ENCODE measurements at regions of chr12 and their contacts with region 1.

Region 1: DNA sequence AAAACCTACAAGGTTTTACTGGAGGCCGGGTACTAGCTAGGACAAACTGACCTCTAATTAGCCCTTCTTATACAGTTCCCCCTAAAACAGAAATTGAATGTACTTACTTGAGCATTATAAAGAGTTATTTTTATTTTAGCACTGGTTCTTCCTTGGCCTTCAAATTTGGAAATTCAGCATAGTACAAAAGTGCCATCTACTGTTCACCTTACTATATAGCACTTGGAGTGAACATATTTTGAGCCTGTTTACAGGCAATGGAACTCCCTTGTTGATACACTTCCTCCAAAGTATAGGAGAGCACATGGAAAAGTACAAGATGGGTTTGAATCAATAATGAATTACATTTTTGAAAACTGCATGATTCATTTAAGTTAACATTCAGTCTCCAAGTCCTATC is 3.9 kb upstream of the POC1B start:
- DNase-seq: peak; percentile 13
- ATAC-seq: no peak
- H3K4me3 ChIP-seq: no peak overlapping the region
- H3K27ac ChIP-seq: no peak overlapping the region
- H3K4me1 ChIP-seq: peaks cover 7% of the 10 kb centered on the region
- H3K27me3 ChIP-seq: no peaks in the 10 kb centered on the region
- CTCF ChIP-seq: peak; percentile 63 to 85 (median 79); a peak in 5 of 6 replicates
- EP300 ChIP-seq: no peak
- POLR2A ChIP-seq: no peak
- RAD21 ChIP-seq: peak; percentile 88

Region 2: DNA sequence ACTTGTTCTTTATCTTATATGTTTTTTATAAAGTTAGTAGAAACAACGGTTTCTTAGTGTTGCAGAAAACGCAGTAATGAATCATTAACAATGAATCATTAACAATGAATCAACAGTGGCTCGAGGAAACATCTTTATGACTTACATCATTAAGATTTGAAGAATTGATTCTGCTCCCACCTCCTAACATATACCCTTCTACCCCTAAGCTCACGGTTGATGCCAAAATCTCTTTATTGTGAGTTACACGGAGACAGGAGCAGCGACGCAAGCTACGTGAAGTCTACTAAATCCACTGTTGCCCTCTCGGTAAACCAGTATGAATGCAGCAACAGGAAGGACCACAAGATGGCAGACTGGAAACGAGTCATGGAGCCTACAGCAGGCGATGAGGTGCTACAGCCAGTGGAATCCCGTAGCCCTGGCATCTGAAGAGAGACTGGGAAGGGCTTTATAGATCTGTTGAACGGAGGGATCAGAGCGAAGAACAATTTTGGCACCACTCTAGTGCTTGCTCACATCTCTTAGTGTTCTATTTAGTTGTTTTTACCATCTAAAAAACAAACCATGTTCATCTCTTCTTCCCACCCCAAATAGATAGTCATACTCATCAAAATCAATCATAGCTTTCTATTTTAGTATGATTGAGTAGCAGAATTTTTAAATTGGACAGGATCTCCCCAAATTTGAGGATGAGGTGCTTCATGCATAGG is 510.2 kb before region 1 on chr12:
- CTCF ChIA-PET with region 1: interaction called, 11 read pairs
- POLR2A ChIA-PET with region 1: no interaction called
- RAD21 ChIA-PET with region 1: interaction called, 4 read pairs
- SMC1A ChIA-PET with region 1: interaction called, 6 read pairs
- in situ Hi-C with region 1: loop called (anchors 5 kb)
- intact Hi-C with region 1: loop called (anchors 1 kb)
- DNase-seq: peak; percentile 32
- ATAC-seq: peak; percentile 99
- H3K4me3 ChIP-seq: no peak overlapping the region
- H3K27ac ChIP-seq: no peak overlapping the region
- H3K4me1 ChIP-seq: no peaks in the 10 kb centered on the region
- H3K27me3 ChIP-seq: no peaks in the 10 kb centered on the region
- CTCF ChIP-seq: peak; percentile 76 to 91 (median 77); a peak in 5 of 6 replicates
- EP300 ChIP-seq: no peak
- POLR2A ChIP-seq: no peak
- RAD21 ChIP-seq: peak; percentile 91

Region 3: GRCh38 chr12:89051065-89051677 is 478.6 kb before region 1 on chr12:
- CTCF ChIA-PET with region 1: no interaction called
- POLR2A ChIA-PET with region 1: no interaction called
- RAD21 ChIA-PET with region 1: no interaction called
- SMC1A ChIA-PET with region 1: no interaction called
- in situ Hi-C with region 1: no loop called
- intact Hi-C with region 1: loop called (anchors 1 kb)
- DNase-seq: no peak
- ATAC-seq: peak; percentile 70
- H3K4me3 ChIP-seq: no peak overlapping the region
- H3K27ac ChIP-seq: no peak overlapping the region
- H3K4me1 ChIP-seq: no peaks in the 10 kb centered on the region
- H3K27me3 ChIP-seq: no peaks in the 10 kb centered on the region
- CTCF ChIP-seq: peak; percentile 66 to 74 (median 69)
- EP300 ChIP-seq: no peak
- POLR2A ChIP-seq: no peak
- RAD21 ChIP-seq: peak; percentile 96

Region 4: DNA sequence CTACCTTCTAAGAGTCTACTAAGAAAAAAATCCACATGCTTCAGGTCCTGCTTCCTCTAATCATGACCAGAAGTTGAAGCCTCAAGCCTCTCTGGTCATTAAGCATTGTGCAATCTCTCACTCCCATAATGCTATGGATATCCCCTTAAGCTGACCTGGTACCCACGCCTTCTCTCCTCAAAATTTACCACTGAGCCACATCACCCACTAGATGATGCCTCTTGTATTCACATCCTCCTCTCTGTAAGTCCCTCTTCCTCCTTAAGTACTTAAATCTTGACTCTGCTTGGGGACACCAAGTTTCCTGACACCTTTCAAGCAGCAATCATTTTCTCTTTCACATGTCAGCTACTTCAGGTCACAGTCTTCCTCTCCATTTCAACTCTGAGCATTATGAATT is 15.0 kb before region 1 on chr12:
- CTCF ChIA-PET with region 1: interaction called, 12 read pairs
- POLR2A ChIA-PET with region 1: interaction called, 3 read pairs
- RAD21 ChIA-PET with region 1: no interaction called
- SMC1A ChIA-PET with region 1: interaction called, 6 read pairs
- in situ Hi-C with region 1: no loop called
- intact Hi-C with region 1: no loop called
- DNase-seq: no peak
- ATAC-seq: peak; percentile 85
- H3K4me3 ChIP-seq: no peak overlapping the region
- H3K27ac ChIP-seq: no peak overlapping the region
- H3K4me1 ChIP-seq: peaks cover 5% of the 10 kb centered on the region; the same call in 1 of the 2 replicates
- H3K27me3 ChIP-seq: no peaks in the 10 kb centered on the region
- CTCF ChIP-seq: no peak
- EP300 ChIP-seq: no peak
- POLR2A ChIP-seq: no peak
- RAD21 ChIP-seq: no peak